Left lung (tissue), 14 donors: ENCODE measurements at regions of chr6 and their contacts with region 1.

Region 1: GRCh38 chr6:139539852-139540251 is 165.4 kb upstream of the CITED2 start:
- DNase-seq: peak in 2 of 4 donors; percentile 69 to 83
- ATAC-seq: peak; percentile 83
- H3K4me3 ChIP-seq: no peak overlapping the region
- H3K27ac ChIP-seq: peak overlapping the region; percentile 68 to 76
- H3K4me1 ChIP-seq: peaks cover 16 to 24% of the 10 kb centered on the region in 2 donors
- H3K27me3 ChIP-seq: no peaks in the 10 kb centered on the region
- CTCF ChIP-seq: no peak

Region 2: DNA sequence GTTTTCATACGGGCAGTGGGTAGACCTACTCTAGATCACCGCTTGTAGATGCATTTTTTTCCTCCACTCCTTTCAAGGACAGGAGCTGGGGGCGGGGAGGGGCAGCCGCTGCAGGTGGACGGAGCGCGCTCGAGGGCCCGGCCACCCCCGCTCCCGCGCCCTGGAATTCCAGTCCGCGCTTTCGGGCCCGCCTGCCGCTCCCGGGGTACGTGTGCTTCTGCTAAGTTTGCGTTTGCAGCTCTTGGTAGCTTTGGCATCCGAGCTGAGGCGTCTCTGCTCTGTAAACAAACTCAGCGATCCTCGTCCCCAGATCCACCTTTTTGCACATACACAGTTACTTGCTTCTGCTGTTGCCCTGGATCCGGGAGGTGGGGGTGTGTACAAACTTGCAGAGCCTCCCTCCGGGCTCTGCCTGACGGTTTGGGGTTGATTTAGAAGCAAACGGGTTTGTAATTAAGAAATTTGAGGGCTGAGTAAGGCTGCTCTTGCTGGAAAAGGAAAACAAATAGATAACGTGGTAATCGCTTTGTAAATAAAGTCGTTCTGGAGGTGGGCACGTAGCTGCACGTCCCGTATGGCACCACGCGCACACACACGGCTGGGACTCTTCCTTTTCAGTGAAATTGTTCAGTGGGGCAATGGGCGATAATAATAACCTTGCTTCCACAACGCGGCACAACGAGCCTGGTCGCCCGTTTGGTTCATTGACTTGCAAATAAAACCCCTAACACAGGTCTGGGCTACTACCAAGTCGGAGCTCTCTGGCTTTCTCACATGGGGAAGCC is 164.4 kb before region 1 on chr6:
- intact Hi-C with region 1: loop called in 1 of 2 experiments (anchors 5 kb)
- DNase-seq: peak; percentile 92 to 97 (median 93)
- ATAC-seq: peak; percentile 80
- H3K4me3 ChIP-seq: peak overlapping the region; percentile 88 to 97
- H3K27ac ChIP-seq: peak overlapping the region; percentile 97 to 99
- H3K4me1 ChIP-seq: peaks cover 8 to 39% of the 10 kb centered on the region in 2 donors
- H3K27me3 ChIP-seq: no peaks in the 10 kb centered on the region
- CTCF ChIP-seq: no peak

Region 3: GRCh38 chr6:139648430-139649000 is 108.7 kb after region 1 on chr6:
- intact Hi-C with region 1: no loop called
- DNase-seq: no peak
- ATAC-seq: peak; percentile 37
- H3K4me3 ChIP-seq: no peak overlapping the region
- H3K27ac ChIP-seq: no peak overlapping the region
- H3K4me1 ChIP-seq: peaks cover 0 to 18% of the 10 kb centered on the region in 2 donors
- H3K27me3 ChIP-seq: no peaks in the 10 kb centered on the region
- CTCF ChIP-seq: no peak